Esophagus squamous epithelium (tissue), 5 donors: ENCODE measurements at regions of chr6 and their contacts with region 1.

Region 1: GRCh38 chr6:36594029-36594815 is at the start of gene SRSF3:
- DNase-seq: peak; percentile 89
- H3K4me3 ChIP-seq: peak within 1 kb of the TSS; percentile 61 to 96 (median 88)
- H3K27ac ChIP-seq: peak within 1 kb of the TSS; percentile 95 to 100 (median 98)
- H3K4me1 ChIP-seq: peaks cover 8 to 54% (median 31%) of the 10 kb centered on the region in 3 donors
- H3K27me3 ChIP-seq: no peaks in the 10 kb centered on the region
- CTCF ChIP-seq: peak; percentile 16 to 66 (median 56)
- POLR2A ChIP-seq: peak in 3 of 4 donors; percentile 51 to 99 (median 98)
- total RNA-seq, gene SRSF3: 111 to 213 (median 185) TPM

Region 2: GRCh38 chr6:36441307-36441894 is 152.8 kb before region 1 on chr6:
- intact Hi-C with region 1: no loop called
- DNase-seq: peak; percentile 37
- H3K4me3 ChIP-seq: peak overlapping the region in 2 of 4 donors; percentile 89 to 90
- H3K27ac ChIP-seq: peak overlapping the region; percentile 97 to 99 (median 98)
- H3K4me1 ChIP-seq: peaks cover 15 to 48% (median 28%) of the 10 kb centered on the region in 3 donors
- H3K27me3 ChIP-seq: no peaks in the 10 kb centered on the region
- CTCF ChIP-seq: no peak
- POLR2A ChIP-seq: peak in 1 of 4 donors; percentile 70

Region 3: DNA sequence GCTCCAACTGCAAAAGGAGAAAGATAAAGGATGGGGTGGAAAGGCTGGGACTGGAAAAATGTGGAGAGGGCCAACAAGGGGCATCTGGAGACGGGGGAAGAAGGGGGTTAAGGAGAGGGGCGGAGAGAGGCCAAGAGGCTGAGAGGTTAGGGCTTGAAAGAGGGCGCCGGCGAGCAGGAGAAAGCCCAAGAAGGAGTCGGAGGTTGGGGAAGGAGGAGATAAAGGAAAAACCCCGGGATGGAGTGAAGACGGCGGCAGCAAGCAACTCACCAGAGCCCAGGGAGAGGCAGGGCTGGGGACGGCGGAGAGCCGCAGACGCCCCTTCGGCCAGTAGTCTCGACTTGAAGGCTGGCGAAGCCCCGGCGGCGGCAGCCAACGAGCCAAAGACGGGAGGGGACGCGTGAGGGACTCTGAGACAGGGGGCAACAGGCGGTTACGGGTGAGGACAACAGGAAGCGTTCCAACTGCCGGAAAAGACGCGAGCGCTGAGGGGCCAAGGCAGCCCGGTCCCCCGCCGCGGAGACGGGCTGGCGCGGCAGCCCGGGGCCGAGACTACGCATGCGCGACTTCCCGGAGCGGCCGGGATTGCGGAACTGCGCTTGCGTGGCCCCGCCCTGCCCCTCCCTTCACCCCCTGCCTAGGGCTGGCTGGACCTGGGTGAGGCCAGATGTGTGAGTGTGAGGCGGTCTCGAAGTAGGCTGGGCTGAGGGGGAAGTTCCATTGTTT is 47.1 kb before region 1 on chr6 and contains the start of gene STK38:
- intact Hi-C with region 1: loop called (anchors 10 kb)
- DNase-seq: peak; percentile 35
- H3K4me3 ChIP-seq: peak within 1 kb of the TSS; percentile 77 to 100 (median 87)
- H3K27ac ChIP-seq: peak within 1 kb of the TSS; percentile 95 to 100 (median 98)
- H3K4me1 ChIP-seq: peaks cover 19 to 54% (median 22%) of the 10 kb centered on the region in 3 donors
- H3K27me3 ChIP-seq: no peaks in the 10 kb centered on the region
- CTCF ChIP-seq: peak in 2 of 6 experiments; percentile 4 to 16
- POLR2A ChIP-seq: peak in 3 of 4 donors; percentile 89 to 99 (median 98)
- total RNA-seq, gene STK38: 26.5 to 33.6 (median 30.3) TPM

Region 4: DNA sequence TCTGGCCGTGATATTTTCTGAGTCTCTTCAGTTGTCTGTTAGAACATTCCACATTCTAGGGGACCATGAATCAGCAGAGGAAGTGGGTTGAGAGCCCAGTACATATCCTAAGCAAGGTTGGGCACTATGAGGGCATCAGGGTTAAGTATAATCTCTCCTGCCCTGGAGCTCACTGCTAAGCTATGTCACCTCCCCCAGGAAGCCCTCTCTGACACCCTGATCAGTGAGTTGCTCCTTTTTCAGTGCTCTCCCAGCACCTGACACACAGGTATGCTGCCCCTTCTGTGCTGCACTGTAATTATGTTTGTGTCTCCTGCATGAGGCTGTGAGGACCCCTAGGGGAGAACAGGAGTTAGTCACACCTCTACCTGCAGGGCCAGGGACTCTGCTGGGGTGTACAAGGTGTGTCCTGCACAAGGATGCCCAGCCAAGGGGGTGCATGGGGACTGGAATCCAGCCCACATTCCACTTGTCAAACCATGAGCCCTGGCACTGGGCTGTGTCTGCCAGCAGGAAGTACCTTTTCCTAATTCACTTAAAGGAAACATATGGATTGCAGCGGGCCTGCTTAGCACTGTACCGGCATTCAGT is 107.3 kb after region 1 on chr6:
- intact Hi-C with region 1: no loop called
- DNase-seq: no peak
- H3K4me3 ChIP-seq: no peak overlapping the region
- H3K27ac ChIP-seq: no peak overlapping the region
- H3K4me1 ChIP-seq: peaks cover 5 to 13% (median 10%) of the 10 kb centered on the region in 3 donors
- H3K27me3 ChIP-seq: no peaks in the 10 kb centered on the region
- CTCF ChIP-seq: peak in 2 of 6 experiments; percentile 15 to 42
- POLR2A ChIP-seq: no peak

Region 5: DNA sequence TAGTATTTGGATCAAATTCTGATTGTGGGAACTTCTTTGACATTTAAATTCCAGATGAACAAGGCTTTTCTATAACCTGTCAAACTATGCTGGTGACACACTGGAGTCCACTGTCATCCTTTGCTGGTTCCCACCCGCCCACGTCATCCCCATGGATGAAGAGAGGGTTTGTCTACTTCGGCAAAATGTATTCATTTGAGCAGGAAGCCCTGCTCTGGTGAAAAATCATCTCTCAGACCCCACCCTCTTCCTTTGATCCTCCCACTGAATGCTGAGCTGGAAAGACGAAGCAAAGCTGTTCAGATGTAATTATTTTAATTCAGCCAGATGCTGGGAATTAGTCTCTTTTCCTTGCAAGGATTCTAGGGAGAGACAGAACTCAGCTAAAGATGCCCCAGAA is 194.5 kb after region 1 on chr6:
- intact Hi-C with region 1: no loop called
- DNase-seq: no peak
- H3K4me3 ChIP-seq: no peak overlapping the region
- H3K27ac ChIP-seq: no peak overlapping the region
- H3K4me1 ChIP-seq: peaks cover 0 to 10% (median 0%) of the 10 kb centered on the region in 3 donors
- H3K27me3 ChIP-seq: peaks cover 0 to 30% (median 0%) of the 10 kb centered on the region in 4 donors
- CTCF ChIP-seq: no peak
- POLR2A ChIP-seq: no peak

Region 6: DNA sequence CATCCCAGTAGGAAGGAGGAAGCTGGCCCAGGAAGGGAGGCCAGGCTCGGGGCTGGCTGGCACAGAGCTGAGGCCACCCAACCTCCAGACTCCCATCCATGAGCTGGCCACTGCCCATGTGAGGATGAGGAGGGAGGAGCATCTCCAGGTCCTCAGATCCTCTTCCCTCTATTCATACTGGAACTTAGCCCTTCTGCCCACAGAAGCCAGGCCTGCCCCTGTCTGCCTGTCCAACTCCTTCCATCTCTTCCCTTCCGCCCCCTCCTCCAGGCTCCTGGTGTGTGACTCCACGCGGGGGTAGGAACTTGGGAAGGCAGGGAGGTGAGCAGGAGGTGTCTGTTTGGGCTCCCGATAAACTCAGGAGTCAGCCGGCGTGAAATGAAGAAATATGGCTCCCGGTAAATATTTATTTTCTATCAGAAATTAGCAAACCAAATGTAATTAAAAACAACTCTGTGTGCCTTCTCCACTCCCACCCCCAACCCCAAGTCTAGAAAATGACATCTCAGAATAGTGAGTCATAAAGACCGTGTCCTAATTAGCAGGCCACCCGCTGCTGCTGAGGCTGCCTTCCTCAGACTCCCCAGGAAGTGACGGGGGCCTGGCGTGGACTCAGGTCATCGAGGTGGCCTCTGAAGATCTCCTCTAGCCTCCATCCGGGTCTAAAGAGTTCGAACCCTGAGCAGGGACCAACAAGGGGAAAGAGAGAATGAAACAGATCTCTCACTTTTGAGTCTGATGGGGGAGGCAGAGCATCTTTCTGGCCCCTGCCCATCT is 1021.5 kb after region 1 on chr6:
- intact Hi-C with region 1: no loop called
- DNase-seq: no peak
- H3K4me3 ChIP-seq: no peak overlapping the region
- H3K27ac ChIP-seq: no peak overlapping the region
- H3K4me1 ChIP-seq: no peaks in the 10 kb centered on the region
- H3K27me3 ChIP-seq: peaks cover 0 to 53% (median 0%) of the 10 kb centered on the region in 4 donors
- CTCF ChIP-seq: no peak
- POLR2A ChIP-seq: no peak